Posterior cingulate gyrus (tissue), 11 donors: ENCODE measurements at regions of chr19 and their contacts with region 1.

Region 1: DNA sequence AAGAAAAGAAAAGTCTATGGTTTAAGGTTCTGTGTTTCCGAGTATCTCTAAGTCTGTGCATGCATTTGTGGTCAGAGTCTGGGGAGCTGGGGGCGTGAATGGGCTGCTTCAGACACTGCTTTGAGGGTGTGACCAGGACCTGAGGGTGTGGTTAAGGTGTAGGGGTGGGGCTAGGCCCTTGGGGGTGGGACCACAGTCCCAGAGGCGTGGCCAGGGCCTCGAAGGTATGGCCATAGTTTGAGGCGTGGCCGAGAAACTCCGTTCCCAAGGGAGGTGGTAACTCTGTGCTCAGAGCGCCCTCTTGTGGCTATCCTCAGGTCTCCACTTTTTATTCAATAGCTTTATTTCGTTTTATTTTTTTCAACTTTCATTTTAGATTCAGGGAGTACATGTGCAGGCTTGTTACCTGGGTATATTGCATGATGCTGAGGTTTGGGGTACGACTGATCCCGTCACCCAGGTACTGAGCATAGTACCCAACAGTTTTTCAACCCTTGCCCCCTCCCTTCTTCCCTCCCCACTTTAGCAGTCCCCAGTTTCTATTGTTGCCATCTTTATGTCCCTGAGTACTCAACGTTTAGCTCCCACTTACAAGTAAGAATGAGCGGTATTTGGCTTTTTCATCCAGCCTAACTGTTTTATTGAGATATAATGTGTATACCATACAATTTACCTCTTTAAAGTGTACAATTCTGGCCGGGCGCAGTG is 7.0 kb upstream of the CBLC start:
- DNase-seq: peak; percentile 33 to 95 (median 79)

Region 2: DNA sequence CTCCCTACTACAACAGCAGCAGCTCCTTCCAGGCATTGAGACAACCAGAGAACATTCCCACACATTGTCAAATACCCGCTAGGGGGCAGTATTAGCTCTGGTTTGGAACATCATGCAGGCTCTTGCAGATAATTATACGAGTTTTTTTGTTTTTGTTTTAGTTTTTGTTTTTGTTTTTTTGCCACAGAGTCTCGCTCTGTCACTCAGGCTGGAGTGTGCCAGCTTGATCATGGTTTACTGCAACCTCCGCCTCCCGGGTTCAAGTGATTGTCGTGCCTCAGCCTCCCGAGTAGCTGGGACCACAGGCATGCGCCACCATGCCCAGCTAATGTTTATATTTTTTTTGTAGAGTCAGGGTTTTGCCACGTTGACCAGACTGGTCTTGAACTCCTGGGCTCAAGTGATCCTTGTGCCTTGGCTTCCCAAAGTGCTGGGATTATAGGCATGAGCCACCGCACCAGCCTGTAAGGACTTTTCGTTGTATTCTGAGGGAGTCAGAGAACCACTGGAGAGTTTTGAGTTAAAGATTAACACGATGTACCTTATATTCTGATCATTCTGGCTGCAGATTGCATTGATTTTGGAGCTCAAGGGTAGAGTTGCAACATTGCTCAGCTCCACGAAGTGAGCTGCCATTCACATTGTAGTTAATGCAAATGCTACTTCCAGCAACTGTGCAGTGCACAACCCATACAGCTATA is 199.6 kb before region 1 on chr19:
- intact Hi-C with region 1: loop called (anchors 2 kb)
- DNase-seq: peak in 5 of 10 donors; percentile 16 to 58 (median 44)

Region 3: GRCh38 chr19:44689056-44689895 is 81.4 kb before region 1 on chr19:
- intact Hi-C with region 1: loop called (anchors 1 kb)
- DNase-seq: peak; percentile 31 to 94 (median 66)

Region 4: GRCh38 chr19:44723952-44724319 is 46.8 kb before region 1 on chr19:
- intact Hi-C with region 1: loop called (anchors 1 kb)
- DNase-seq: peak; percentile 55 to 97 (median 78)